ENCODE measurements at regions of chr20 and their contacts with region 1.

Region 1: DNA sequence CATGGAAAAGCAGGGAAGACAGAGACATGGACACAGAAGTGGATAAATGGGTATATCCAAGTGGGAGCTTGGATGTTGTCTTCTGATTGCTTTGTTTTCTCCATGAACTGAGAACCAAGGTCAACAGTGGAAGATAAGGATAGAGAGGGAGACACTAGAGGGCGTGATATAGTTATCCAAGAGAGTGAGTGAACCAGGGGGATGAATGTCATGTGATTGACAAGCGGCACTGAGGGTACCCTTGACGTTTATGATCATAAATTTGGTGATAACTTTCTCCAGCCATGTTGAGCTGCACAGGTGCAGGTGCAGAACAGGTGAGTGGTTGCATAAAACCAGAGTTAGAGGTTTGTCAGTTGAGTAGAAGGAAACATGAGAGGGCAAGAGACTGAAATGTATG is 20.7 kb downstream of the EBF4 start:
- DNase-seq: no peak
- H3K4me3 ChIP-seq: no peak overlapping the region
- CTCF ChIP-seq: no peak

Region 2: DNA sequence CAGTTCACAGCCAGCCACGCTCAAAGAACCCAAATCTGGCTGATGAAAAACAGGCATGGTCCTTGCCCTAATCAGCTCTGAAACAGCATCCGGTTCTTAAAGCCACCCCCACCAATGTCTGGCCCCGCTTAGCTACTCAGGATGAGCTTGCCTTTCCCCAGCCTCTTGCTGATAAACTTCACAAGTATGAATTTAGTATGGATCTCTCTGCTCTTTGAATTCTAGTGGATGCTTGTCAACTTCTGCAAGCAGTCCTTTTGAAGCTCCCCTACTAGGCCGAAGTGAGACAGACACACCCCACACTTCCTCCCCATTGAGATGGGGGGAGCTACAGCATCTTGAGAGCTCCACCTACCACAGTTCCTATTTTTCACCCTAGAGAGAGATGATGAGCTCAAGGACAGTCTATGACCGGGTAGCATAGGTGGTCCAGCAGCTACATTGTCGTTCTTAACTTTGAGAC is 16.0 kb after region 1 on chr20:
- CTCF ChIA-PET with region 1: interaction called, 11 read pairs
- POLR2A ChIA-PET with region 1: no interaction called
- DNase-seq: no peak
- H3K4me3 ChIP-seq: no peak overlapping the region
- CTCF ChIP-seq: no peak

Measured in AG04449 (cell line).